ENCODE measurements at regions of chr1 and their contacts with region 1.

Region 1: GRCh38 chr1:193121616-193122593 is at the start of gene CDC73:
- DNase-seq: peak; percentile 98 to 99
- ATAC-seq: peak; percentile 98 to 99 (median 98)
- H3K4me3 ChIP-seq: peak within 1 kb of the TSS; percentile 92
- H3K27ac ChIP-seq: peak within 1 kb of the TSS; percentile 98
- H3K4me1 ChIP-seq: peaks cover 21% of the 10 kb centered on the region
- H3K27me3 ChIP-seq: no peaks in the 10 kb centered on the region
- CTCF ChIP-seq: peak; percentile 93
- total RNA-seq, gene CDC73: 24.9 to 30.1 (median 28.5) TPM

Region 2: DNA sequence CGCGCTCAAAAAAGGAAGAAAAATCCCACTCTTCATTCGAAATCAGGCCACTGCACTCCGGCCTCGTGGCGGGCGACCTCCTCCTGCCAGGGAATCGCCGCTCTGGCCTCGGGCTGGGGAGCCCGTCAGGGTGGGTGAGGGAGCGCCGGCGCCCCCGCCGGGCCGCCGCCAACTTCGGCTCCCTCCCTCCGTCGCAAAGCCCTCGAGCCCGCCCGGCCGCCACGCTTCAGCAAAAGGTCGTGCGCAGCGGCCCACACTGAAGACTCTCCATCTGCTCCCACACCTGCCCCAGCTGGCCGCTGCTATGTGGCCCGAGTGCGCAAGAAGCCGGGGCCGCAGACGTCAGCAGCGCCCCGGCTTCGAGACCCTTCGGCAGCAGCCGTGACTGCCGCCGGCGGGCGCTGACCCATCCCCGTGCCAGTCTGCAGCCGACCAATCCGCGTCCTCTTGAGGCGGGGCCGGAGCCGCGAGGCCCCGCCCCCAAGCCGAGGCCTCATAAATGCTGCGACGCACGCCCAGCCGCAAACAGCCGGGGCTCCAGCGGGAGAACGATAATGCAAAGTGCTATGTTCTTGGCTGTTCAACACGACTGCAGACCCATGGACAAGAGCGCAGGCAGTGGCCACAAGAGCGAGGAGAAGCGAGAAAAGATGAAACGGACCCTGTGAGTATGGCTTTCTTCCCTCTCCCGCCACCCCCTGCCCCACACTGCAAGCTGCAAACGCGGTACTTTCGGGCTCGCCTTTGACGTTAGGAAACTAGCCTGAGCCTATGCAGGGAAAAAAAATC is 313.2 kb before region 1 on chr1 and contains the start of gene RGS2:
- intact Hi-C with region 1: loop called in 1 of 2 experiments (anchors 5 kb)
- DNase-seq: peak; percentile 90 to 93
- ATAC-seq: peak; percentile 98 to 99 (median 98)
- H3K4me3 ChIP-seq: peak within 1 kb of the TSS; percentile 78
- H3K27ac ChIP-seq: peak within 1 kb of the TSS; percentile 66
- H3K4me1 ChIP-seq: peaks cover 14% of the 10 kb centered on the region
- H3K27me3 ChIP-seq: no peaks in the 10 kb centered on the region
- CTCF ChIP-seq: no peak
- total RNA-seq, gene RGS2: 3.5 to 4.7 (median 3.8) TPM

Region 3: DNA sequence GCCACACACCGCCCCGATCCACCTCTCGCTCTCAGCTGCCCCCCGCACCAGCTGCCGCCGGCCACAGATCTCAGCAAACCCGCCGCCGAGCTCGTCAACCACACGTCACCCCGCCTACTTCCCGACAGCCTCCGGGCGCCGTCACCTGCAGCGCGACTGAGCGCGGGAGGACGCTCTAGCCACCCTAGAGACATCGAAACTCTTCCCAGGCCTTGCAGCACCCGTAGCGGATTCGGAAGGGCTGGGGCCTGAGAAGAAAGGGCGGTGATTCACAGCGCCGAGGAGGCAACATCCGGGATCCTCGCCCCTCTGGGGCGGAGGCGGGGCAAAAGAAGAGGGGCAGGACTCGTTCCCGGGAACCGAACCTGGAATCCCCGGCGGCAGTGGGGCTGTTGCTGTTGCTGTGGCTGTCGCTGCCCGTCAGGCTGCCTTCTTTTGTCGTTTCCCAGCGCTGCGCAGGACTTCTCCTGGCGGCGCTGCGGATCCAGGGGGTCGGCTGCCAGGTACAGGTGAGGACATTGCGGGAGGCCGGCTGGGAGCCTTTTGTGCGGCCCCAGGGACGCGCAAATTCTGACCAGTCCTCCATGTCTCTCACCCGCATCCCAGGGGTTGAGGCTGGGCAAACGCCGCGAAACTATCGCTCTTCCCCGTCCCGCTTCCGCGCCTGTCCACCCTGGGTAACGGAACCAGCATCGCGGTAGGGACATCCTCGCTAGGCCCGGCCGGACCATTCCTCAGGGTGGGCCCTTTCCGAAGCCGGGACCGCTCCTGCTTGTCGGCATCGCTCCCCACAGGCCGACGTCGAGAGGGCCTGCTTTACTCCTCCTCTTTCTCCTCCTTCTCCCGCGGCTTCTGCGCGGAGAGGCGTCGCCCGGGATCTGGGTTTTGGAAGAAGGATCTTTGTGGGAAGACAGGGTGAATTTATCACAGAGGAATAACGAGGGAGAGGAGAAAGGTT is 62.4 kb before region 1 on chr1 and contains the starts of genes RO60 and UCHL5:
- intact Hi-C with region 1: loop called (anchors 2 to 5 kb)
- DNase-seq: peak; percentile 96 to 98
- ATAC-seq: peak; percentile 96 to 98 (median 98)
- H3K4me3 ChIP-seq: peak within 1 kb of the TSS; percentile 93
- H3K27ac ChIP-seq: peak within 1 kb of the TSS; percentile 99
- H3K4me1 ChIP-seq: peaks cover 47% of the 10 kb centered on the region
- H3K27me3 ChIP-seq: no peaks in the 10 kb centered on the region
- CTCF ChIP-seq: no peak
- total RNA-seq, gene RO60: 35.1 to 44.3 (median 39.7) TPM
- total RNA-seq, gene UCHL5: 28.3 to 43.3 (median 34.1) TPM

Region 4: DNA sequence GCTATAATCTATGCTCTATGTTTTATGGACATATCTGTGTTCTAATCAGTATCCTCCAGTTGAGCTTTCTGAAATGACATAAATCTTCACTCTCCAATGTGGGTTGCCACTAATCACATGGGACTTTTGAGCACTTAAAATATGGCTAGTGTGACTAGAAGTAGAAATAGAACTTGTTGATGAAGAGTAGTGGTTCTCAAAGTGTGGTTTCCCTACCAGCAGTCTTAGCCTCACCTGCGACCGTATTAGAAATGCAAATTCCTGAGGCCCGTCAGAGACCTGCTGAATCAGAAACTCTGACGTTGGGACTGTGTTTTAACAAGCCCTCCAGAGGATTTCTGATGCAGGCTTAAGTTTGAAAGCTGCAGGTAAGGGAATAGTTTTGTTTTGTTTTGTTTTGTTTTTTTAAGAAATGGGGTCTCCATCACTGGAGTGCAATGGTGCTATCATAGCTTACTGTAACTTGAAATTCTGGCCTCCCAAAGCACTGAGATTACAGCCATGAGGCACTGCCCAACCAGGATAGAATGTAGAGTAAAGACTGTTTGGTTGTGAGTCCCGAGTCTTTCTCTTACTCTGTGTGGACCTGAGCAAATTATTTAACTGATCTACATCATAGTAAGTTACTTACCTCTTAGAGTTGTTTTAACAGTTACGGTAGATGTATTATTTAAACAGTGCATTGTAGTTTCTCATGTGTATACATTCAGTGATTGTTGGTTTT is 38.4 kb before region 1 on chr1:
- intact Hi-C with region 1: no loop called
- DNase-seq: no peak
- ATAC-seq: no peak
- H3K4me3 ChIP-seq: no peak overlapping the region
- H3K27ac ChIP-seq: no peak overlapping the region
- H3K4me1 ChIP-seq: no peaks in the 10 kb centered on the region
- H3K27me3 ChIP-seq: no peaks in the 10 kb centered on the region
- CTCF ChIP-seq: no peak

Region 5: DNA sequence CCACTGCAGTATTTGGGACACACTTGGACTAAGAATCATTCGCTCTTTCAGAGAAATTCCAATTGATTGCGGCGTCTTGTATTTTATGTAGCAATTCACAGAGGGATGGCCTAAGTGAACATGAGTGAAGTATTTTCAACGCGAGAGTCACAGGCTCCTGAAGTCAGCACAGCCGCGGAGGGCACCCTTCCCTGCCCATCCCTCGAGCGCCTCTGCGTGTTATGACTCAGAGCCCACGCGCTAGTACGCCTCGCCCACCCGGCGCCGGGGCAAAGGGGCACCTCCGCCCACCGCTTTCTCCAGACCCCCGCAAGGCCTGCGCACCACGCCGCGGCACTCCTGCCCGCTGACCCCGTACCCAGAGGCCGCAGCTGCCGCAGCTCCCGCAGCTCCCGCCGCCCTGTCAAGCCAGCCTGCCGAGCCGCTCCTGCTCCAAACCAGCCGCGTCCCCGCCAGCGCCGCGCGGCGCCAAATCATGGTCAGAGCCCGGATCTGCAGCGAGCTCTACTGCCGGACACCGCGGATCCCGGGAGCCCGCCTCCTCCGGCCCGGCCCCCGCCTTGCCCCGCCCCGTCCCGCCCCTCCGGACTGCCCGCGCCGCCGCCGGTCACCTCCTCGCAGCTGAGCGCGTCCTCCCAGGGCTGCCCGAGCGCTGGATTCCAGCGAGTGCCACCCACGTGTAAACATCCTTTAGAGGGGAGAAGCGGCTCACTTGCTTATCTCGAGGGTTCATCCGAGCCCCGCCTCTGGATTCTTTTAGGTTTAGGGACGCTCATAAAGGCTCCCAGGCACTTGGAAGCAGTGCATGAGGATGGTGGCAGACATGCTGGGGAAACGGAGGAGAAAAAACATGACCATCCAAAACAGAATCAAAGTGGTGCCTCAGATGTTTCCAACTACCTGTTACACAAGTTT is 16.7 kb before region 1 on chr1 and contains the start of gene GLRX2:
- intact Hi-C with region 1: loop called (anchors 1 to 2 kb)
- DNase-seq: peak; percentile 88 to 93
- ATAC-seq: peak; percentile 94 to 96 (median 96)
- H3K4me3 ChIP-seq: peak within 1 kb of the TSS; percentile 93
- H3K27ac ChIP-seq: peak within 1 kb of the TSS; percentile 97
- H3K4me1 ChIP-seq: peaks cover 25% of the 10 kb centered on the region
- H3K27me3 ChIP-seq: no peaks in the 10 kb centered on the region
- CTCF ChIP-seq: no peak
- total RNA-seq, gene GLRX2: 41.3 to 68.1 (median 54.7) TPM

Measured in psoas muscle (tissue), 8 donors.